H1 (cell line): ENCODE measurements at regions of chr21 and their contacts with region 1.

Region 1: GRCh38 chr21:32994305-32994704 is 31.4 kb upstream of the OLIG2 start:
- DNase-seq: no peak
- H3K4me3 ChIP-seq: no peak overlapping the region
- H3K27ac ChIP-seq: no peak overlapping the region
- H3K4me1 ChIP-seq: peaks cover 0 to 3% (median 1%) of the 10 kb centered on the region in 4 experiments; a peak in 2 of 7 replicates
- H3K27me3 ChIP-seq: no peaks in the 10 kb centered on the region; a peak in 1 of 7 replicates
- CTCF ChIP-seq: peak in 2 of 3 experiments; percentile 43 to 54; a peak in 2 of 4 replicates
- EP300 ChIP-seq: no peak
- POLR2A ChIP-seq: no peak
- RAD21 ChIP-seq: peak; percentile 66 to 69

Region 2: GRCh38 chr21:32978341-32979270 is 15.7 kb before region 1 on chr21:
- CTCF ChIA-PET with region 1: interaction called, 10 read pairs
- POLR2A ChIA-PET with region 1: no interaction called
- DNase-seq: no peak
- H3K4me3 ChIP-seq: no peak overlapping the region
- H3K27ac ChIP-seq: no peak overlapping the region
- H3K4me1 ChIP-seq: peaks cover 0 to 11% (median 2%) of the 10 kb centered on the region in 4 experiments; a peak in 4 of 7 replicates
- H3K27me3 ChIP-seq: no peaks in the 10 kb centered on the region
- CTCF ChIP-seq: peak in 2 of 3 experiments; percentile 6 to 30; a peak in 2 of 4 replicates
- EP300 ChIP-seq: no peak
- POLR2A ChIP-seq: no peak
- RAD21 ChIP-seq: no peak; a peak in 1 of 4 replicates

Region 3: DNA sequence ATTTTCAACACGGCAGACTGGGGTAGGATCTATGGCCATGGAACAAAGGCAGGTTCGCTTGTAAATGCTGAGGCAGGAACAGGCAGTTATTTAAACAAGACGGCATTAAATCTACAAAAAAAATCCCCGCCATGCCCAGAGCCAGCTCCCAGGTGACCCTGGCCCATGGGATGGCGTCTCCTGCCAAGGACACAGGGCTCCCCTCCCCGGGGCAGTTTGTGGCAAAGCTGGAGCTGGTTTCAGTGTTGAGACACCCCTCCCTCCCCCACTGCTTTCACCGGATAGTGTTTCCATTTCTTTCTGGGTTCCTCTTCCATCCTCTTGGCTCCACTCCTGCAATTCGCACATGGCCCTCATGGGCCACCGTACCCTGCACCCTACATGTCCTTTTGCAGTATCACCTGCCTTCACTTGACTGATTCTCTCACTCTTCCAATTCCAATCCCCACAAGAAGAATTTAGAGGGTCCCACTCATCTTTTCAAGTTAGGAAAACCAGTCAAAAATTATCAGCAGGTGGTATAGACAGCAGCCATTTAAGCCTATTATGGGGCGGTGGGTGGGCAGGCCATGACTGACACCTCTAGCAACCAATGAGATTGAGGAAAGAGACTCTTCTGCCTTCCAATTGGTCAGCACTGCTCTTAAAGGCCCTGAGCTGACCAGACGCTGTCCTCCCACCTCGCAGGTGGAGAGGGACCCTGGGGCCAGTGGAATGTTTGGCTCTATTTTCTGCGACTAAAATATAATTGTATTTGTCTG is 127.6 kb after region 1 on chr21:
- CTCF ChIA-PET with region 1: interaction called, 21 read pairs
- POLR2A ChIA-PET with region 1: no interaction called
- DNase-seq: no peak
- H3K4me3 ChIP-seq: no peak overlapping the region
- H3K27ac ChIP-seq: no peak overlapping the region
- H3K4me1 ChIP-seq: peaks cover 6 to 14% (median 10%) of the 10 kb centered on the region in 4 experiments; a peak in 6 of 7 replicates
- H3K27me3 ChIP-seq: peaks cover 0 to 3% (median 0%) of the 10 kb centered on the region in 4 experiments; a peak in 1 of 7 replicates
- CTCF ChIP-seq: no peak
- EP300 ChIP-seq: no peak
- POLR2A ChIP-seq: no peak
- RAD21 ChIP-seq: no peak

Region 4: GRCh38 chr21:33199516-33200217 is 205.4 kb after region 1 on chr21:
- CTCF ChIA-PET with region 1: interaction called, 18 read pairs
- POLR2A ChIA-PET with region 1: no interaction called
- DNase-seq: peak in 1 of 2 experiments; percentile 71
- H3K4me3 ChIP-seq: no peak overlapping the region
- H3K27ac ChIP-seq: no peak overlapping the region
- H3K4me1 ChIP-seq: peaks cover 0 to 8% (median 2%) of the 10 kb centered on the region in 4 experiments; a peak in 4 of 7 replicates
- H3K27me3 ChIP-seq: no peaks in the 10 kb centered on the region; a peak in 1 of 7 replicates
- CTCF ChIP-seq: peak in 2 of 3 experiments; percentile 73 to 82; a peak in 3 of 4 replicates
- EP300 ChIP-seq: no peak
- POLR2A ChIP-seq: no peak
- RAD21 ChIP-seq: peak; percentile 95 to 96

Region 5: GRCh38 chr21:33355355-33355754 is 361.1 kb after region 1 on chr21:
- CTCF ChIA-PET with region 1: no interaction called
- POLR2A ChIA-PET with region 1: no interaction called
- DNase-seq: no peak
- H3K4me3 ChIP-seq: no peak overlapping the region
- H3K27ac ChIP-seq: no peak overlapping the region
- H3K4me1 ChIP-seq: no peaks in the 10 kb centered on the region
- H3K27me3 ChIP-seq: no peaks in the 10 kb centered on the region
- CTCF ChIP-seq: no peak
- EP300 ChIP-seq: no peak
- POLR2A ChIP-seq: no peak
- RAD21 ChIP-seq: no peak